HEK293 (cell line): ENCODE measurements at regions of chr9 and their contacts with region 1.

Region 1: GRCh38 chr9:115591584-115591984 is 473.6 kb upstream of the TNC start:
- H3K4me3 ChIP-seq: no peak overlapping the region
- H3K27ac ChIP-seq: peak overlapping the region; percentile 33; the same call in 1 of the 2 replicates
- H3K4me1 ChIP-seq: 0 out of 2 replicates have a peak, but pooled peaks cover 2% of the 10 kb centered on the region
- CTCF ChIP-seq: 0 out of 2 replicates have a peak, but pooled peaks have one; percentile 24

Region 2: GRCh38 chr9:115556432-115556831 is 35.2 kb before region 1 on chr9:
- CTCF ChIA-PET with region 1: no interaction called
- POLR2A ChIA-PET with region 1: no interaction called
- H3K4me3 ChIP-seq: no peak overlapping the region
- H3K27ac ChIP-seq: no peak overlapping the region
- H3K4me1 ChIP-seq: no peaks in the 10 kb centered on the region
- CTCF ChIP-seq: no peak

Region 3: GRCh38 chr9:115604831-115605483 is 13.4 kb after region 1 on chr9:
- CTCF ChIA-PET with region 1: interaction called, 27 read pairs
- POLR2A ChIA-PET with region 1: no interaction called
- H3K4me3 ChIP-seq: no peak overlapping the region
- H3K27ac ChIP-seq: no peak overlapping the region
- H3K4me1 ChIP-seq: no peaks in the 10 kb centered on the region
- CTCF ChIP-seq: no peak

Region 4: DNA sequence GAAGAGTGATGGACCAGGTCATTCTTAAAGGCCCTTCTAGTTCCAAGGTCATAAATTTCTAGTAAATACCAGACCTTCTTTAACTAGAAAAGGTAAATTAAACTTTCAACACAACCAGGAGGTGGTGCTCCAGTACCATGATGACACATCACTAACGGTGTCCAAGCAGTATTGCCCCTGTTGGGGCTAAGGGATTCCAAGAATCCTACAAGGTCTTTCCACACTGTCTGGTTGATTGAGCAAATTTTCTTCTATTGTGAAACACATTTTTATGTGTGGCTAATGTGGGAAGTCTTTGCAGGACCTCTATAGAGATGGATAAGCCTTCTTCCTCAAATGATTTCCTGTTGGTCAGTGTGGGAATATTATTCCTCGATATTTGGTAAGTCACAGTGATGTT is 102.4 kb after region 1 on chr9:
- CTCF ChIA-PET with region 1: interaction called, 13 read pairs
- POLR2A ChIA-PET with region 1: no interaction called
- H3K4me3 ChIP-seq: no peak overlapping the region
- H3K27ac ChIP-seq: no peak overlapping the region
- H3K4me1 ChIP-seq: no peaks in the 10 kb centered on the region
- CTCF ChIP-seq: 0 out of 2 replicates have a peak, but pooled peaks have one; percentile 15

Region 5: DNA sequence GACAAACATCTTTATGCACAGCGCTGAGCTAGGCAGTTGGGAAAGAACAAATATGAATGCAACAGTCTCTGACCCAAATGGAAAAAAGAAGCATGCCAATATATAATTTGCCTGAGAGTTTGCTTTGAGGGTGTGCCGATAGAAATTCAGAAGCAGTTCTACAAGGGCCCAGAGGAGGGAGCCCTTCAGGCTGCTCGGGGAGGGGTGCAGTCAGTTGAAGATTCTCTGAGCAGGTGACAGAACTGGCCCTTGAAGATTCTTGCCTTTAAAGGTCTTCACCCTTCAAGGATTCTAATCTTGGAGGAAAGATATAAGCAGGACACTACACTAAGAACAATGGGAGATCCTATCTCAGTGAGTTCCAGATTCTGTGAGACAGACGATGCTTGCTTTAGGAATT is 558.3 kb after region 1 on chr9:
- CTCF ChIA-PET with region 1: interaction called, 26 read pairs
- POLR2A ChIA-PET with region 1: no interaction called
- H3K4me3 ChIP-seq: no peak overlapping the region
- H3K27ac ChIP-seq: no peak overlapping the region
- H3K4me1 ChIP-seq: no peaks in the 10 kb centered on the region
- CTCF ChIP-seq: no peak

Region 6: DNA sequence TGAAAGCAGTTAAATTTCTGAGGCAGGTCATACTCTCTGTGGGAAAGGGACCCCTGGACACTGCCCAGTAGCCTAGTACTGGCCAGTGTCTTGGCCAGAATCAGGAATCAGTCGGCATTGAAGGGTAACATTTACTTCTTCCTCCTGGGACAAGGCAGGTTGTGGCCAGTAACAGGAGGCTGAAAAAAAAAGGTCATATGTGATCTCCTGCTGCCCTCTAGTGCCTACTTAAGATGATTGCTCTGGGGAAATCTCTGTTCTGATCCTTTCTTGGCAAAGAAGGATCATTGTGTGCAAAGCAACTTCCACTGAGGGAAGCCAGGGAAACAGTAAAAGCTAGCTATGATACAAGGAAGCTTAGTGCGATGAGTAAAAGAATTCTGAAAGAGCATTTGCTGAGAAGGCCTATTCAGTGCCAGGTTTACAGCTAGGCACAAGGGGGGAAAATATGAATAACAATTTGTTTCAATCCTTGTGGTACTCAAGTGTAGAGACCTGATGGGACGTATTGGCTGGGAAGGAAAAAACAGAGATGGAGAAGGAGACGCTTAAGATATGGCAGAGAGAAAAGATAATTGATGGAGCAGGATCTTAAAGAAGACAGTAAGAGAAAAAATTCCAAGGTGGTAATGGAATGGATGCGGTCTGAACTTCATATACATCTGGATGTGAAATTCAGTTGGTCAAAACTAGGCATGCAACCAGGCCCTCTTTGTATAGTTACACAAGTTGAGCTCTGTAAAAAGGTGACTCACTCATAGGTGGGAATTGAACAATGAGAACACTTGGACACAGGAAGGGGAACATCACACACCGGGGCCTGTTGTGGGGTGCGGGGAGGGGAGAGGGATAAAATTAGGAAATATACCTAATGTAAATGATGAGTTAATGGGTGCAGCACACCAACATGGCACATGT is 1069.7 kb after region 1 on chr9:
- CTCF ChIA-PET with region 1: interaction called, 41 read pairs
- POLR2A ChIA-PET with region 1: no interaction called
- H3K4me3 ChIP-seq: no peak overlapping the region
- H3K27ac ChIP-seq: no peak overlapping the region
- H3K4me1 ChIP-seq: no peaks in the 10 kb centered on the region
- CTCF ChIP-seq: peak; percentile 24; the same call in 1 of the 2 replicates